ENCODE measurements at regions of chr7 and their contacts with region 1.

Region 1: DNA sequence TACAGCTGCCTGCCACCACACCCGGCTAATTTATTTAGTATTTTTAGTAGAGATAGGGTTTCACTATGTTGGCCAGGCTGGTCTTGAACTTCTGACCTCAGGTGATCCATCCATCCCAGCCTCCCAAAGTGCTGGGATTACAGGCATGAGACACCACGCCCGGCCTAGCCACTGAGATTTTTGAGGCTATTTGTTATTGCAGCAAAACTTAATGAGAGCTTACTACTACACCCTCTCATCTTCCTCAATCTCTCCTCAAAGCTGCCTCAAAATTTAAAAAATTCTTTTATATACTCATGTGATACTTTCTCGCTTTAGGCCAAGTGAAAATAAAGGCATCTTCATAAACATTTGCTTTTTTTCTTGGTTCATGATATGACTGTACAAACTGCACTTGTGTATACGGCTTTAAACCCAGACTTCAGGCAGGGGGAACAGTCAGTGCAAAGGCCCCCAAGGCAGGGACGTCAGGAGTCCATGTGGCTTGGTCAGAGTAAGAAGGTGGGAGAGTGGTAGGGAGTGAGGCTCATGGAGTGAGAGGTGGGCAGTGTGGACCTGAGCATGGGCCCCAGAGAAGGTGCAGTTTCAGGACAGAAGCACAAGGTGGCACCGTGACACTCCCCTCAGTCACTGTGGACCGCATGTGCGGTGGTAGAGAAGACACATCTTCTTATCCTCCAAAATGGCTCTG is 55.5 kb downstream of the SYPL1 start:
- DNase-seq: peak; percentile 84
- H3K4me3 Mint-ChIP-seq: no peak overlapping the region
- H3K27ac Mint-ChIP-seq: no peak overlapping the region
- H3K4me1 Mint-ChIP-seq: peaks cover 16% of the 10 kb centered on the region
- H3K27me3 Mint-ChIP-seq: no peaks in the 10 kb centered on the region

Region 2: DNA sequence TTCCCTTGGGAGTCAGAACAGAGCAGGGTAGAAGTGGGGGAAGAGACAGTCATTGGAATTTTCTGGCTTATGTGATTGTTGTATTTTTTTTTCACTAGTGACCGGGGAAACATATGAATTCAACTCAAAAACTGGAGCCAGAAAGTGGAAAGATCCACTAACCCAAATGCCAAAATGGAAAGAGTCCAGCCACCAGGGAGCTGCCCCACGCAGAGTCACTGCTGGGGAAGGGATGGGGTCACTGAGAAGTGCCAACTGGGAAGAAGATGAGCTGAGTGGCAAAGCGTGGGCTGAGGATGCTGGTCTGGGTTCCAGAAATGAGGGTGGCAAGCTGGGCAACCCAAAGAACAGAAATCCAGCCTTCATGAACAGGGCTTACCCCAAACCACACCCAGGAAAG is 24.4 kb before region 1 on chr7:
- CTCF ChIA-PET with region 1: no interaction called
- intact Hi-C with region 1: no loop called
- DNase-seq: no peak
- H3K4me3 Mint-ChIP-seq: no peak overlapping the region
- H3K27ac Mint-ChIP-seq: no peak overlapping the region
- H3K4me1 Mint-ChIP-seq: peaks cover 24% of the 10 kb centered on the region
- H3K27me3 Mint-ChIP-seq: no peaks in the 10 kb centered on the region

Region 3: GRCh38 chr7:106166655-106167342 is 110.1 kb after region 1 on chr7:
- CTCF ChIA-PET with region 1: interaction called, 64 read pairs
- intact Hi-C with region 1: loop called (anchors 1 kb)
- DNase-seq: peak; percentile 63
- H3K4me3 Mint-ChIP-seq: no peak overlapping the region
- H3K27ac Mint-ChIP-seq: no peak overlapping the region
- H3K4me1 Mint-ChIP-seq: no peaks in the 10 kb centered on the region
- H3K27me3 Mint-ChIP-seq: peaks cover 3% of the 10 kb centered on the region

Region 4: GRCh38 chr7:106332201-106332600 is 275.5 kb after region 1 on chr7:
- CTCF ChIA-PET with region 1: no interaction called
- intact Hi-C with region 1: no loop called
- DNase-seq: no peak
- H3K4me3 Mint-ChIP-seq: no peak overlapping the region
- H3K27ac Mint-ChIP-seq: no peak overlapping the region
- H3K4me1 Mint-ChIP-seq: peaks cover 17% of the 10 kb centered on the region
- H3K27me3 Mint-ChIP-seq: peaks cover 25% of the 10 kb centered on the region